K562 (cell line): ENCODE measurements at regions of chr1 and their contacts with region 1.

Region 1: DNA sequence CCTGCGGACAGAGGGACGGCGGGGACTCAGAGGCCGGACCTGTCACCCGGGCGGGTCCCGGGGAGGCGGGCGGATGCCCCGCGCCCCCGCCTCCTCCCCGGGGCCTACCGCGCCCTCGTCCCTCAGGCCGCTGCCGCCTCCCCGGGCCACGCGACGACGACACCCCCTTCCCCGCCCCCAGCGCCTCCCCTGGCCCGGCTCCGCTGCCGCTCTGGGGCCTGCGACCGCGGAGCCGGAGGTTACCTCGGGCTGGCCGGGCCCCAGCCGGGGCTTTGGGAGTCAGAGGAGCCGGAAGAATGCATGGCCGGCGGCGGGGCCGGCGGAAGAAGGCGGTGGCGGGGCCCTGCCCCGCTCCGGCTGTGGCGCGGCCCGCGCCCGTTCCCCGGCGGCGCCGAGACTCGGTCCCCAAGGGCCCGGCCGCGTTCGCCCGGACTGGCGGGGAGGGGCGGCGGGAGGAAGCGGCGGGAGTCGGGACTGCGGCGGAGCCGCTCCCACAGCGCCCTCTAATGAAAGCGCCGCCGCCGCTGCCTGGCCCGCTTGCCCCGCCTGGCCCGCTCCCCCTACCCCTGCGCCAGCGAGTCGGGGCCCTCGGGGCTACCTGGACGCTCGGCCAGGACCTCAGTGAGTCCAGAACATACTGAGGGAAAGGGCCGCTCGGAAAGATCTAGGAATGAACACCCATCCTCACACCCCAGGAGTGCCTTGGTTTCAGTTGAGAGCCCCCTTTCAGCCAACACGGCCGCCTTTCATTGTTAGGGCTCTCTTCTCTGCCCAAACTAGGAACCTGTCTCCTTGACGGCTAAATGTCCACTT is at the start of gene LPGAT1:
- DNase-seq: peak; percentile 85 to 91 (median 91)
- ATAC-seq: peak; percentile 96
- H3K4me3 ChIP-seq: peak within 1 kb of the TSS; percentile 83
- H3K27ac ChIP-seq: peak within 1 kb of the TSS; percentile 76
- H3K4me1 ChIP-seq: peaks cover 18 to 20% of the 10 kb centered on the region in 2 experiments
- H3K27me3 ChIP-seq: no peaks in the 10 kb centered on the region
- CTCF ChIP-seq: peak; percentile 64 to 92 (median 80)
- EP300 ChIP-seq: no peak
- POLR2A ChIP-seq: no peak
- RAD21 ChIP-seq: peak; percentile 80 to 87
- polyA plus RNA-seq, gene LPGAT1: 5.7 to 6.7 TPM

Region 2: GRCh38 chr1:211092955-211093354 is 737.6 kb before region 1 on chr1:
- CTCF ChIA-PET with region 1: no interaction called
- POLR2A ChIA-PET with region 1: no interaction called
- in situ Hi-C with region 1: no loop called
- intact Hi-C with region 1: no loop called
- DNase-seq: no peak
- ATAC-seq: no peak
- H3K4me3 ChIP-seq: no peak overlapping the region
- H3K27ac ChIP-seq: no peak overlapping the region
- H3K4me1 ChIP-seq: no peaks in the 10 kb centered on the region
- H3K27me3 ChIP-seq: no peaks in the 10 kb centered on the region; a peak in 2 of 5 replicates
- CTCF ChIP-seq: no peak
- EP300 ChIP-seq: no peak
- POLR2A ChIP-seq: no peak
- RAD21 ChIP-seq: no peak

Region 3: GRCh38 chr1:211680752-211681327 is 149.7 kb before region 1 on chr1:
- CTCF ChIA-PET with region 1: interaction called, 9 read pairs
- POLR2A ChIA-PET with region 1: interaction called, 7 read pairs
- in situ Hi-C with region 1: no loop called
- intact Hi-C with region 1: loop called (anchors 5 kb)
- DNase-seq: peak; percentile 78 to 92 (median 84)
- ATAC-seq: peak; percentile 82
- H3K4me3 ChIP-seq: no peak overlapping the region
- H3K27ac ChIP-seq: no peak overlapping the region
- H3K4me1 ChIP-seq: peaks cover 4 to 12% of the 10 kb centered on the region in 2 experiments; a peak in 4 of 5 replicates
- H3K27me3 ChIP-seq: peaks cover 7 to 27% of the 10 kb centered on the region in 2 experiments; a peak in 2 of 5 replicates
- CTCF ChIP-seq: peak; percentile 92 to 97 (median 97)
- EP300 ChIP-seq: 0 out of 2 replicates have a peak, but pooled peaks have one; percentile 15
- POLR2A ChIP-seq: no peak
- RAD21 ChIP-seq: peak; percentile 95 to 97

Region 4: DNA sequence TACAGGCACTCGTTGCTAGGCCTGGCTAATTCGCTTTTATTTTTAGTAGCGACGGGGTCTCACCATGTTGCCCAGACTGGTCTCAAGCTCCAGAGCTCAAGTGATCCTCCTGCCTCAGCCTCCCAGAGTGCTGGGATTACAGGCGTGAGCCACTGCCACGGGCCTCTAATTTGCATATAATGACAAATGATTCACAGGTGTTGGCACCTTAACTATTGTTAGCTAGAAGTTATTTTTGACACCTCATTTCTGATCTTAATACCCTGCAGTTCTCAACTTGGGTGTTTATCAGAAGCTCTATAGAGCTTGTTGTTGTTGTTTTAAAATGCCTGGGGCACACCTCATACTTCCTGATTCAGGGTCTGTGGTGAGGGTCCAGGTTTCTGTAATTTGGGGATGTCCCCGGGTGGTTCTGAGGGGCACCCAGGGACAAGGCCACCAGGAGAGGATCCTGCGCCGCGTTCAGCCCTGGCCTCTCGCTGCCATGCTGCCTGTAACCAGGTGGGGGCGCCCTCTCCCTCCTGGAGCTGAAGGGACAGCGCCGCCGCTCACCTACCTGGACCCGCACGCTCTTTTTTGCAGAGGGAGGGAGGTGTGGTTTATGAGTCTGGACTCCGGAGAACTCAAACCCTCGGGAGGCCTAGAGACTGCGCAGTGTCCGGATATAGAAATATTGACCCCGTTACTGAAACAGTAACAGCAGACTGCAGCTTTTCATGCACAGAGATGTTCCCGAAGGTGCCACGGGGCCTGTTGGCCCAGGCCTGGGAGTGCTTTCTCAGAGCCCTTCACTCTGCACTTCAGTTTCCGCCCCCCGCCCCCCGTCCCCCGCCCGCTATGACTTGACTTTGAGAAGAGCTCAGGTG is 132.1 kb before region 1 on chr1:
- CTCF ChIA-PET with region 1: interaction called, 9 read pairs
- POLR2A ChIA-PET with region 1: interaction called, 4 read pairs
- in situ Hi-C with region 1: loop called (anchors 5 kb)
- intact Hi-C with region 1: loop called (anchors 1 kb)
- DNase-seq: peak; percentile 90 to 94 (median 92)
- ATAC-seq: peak; percentile 97
- H3K4me3 ChIP-seq: no peak overlapping the region
- H3K27ac ChIP-seq: no peak overlapping the region
- H3K4me1 ChIP-seq: peaks cover 12 to 13% of the 10 kb centered on the region in 2 experiments; a peak in 4 of 5 replicates
- H3K27me3 ChIP-seq: peaks cover 0 to 7% of the 10 kb centered on the region in 2 experiments; a peak in 1 of 5 replicates
- CTCF ChIP-seq: peak; percentile 99 to 100 (median 100)
- EP300 ChIP-seq: peak; percentile 31; the same call in 1 of the 2 replicates
- POLR2A ChIP-seq: no peak
- RAD21 ChIP-seq: peak; percentile 99

Region 5: DNA sequence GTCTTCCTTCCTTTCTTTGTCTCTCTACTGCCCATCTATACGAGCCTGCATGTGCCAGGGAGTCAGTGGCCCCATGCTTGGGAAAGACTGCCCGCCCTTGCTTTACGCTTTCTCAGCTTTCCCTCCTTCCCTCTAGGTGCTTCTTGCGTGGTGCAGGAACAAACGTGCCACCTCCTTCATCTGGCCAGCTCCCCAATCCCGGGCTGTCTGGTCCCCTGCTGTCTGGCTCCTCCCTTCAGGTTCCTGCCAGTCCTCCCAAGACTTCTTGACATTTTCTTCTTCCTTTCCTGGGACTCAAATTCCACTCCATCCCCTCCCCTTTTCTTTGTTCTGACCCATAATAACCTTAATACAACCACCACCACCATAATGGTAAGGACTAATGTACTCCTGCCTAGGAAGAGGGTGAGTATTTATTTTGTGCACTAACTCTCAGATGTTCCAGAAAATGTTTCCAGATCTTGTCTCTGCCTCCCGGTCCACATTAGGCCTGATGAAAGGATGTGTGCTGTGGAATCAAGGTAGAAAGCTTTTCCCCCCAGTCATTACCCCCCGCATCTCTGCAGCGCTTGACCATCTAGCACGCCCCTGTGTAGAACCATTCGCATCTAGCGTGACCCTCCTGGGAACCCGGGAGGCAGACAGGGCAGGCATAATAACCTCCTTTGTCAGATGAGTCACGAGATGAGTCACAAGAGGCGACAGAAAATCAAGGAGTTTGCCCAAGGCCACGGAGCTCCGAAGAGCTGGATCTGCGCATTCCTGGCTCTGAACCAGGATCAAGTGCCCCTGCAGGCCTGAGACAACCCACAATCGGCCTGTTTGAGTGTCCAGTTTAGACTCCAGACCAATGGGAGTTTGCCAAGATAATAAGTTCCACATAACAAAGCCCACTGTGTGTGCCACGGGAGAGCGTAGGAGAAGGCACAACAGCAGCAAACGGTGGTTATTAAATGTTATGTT is 95.0 kb before region 1 on chr1:
- CTCF ChIA-PET with region 1: no interaction called
- POLR2A ChIA-PET with region 1: no interaction called
- in situ Hi-C with region 1: no loop called
- intact Hi-C with region 1: loop called (anchors 5 kb)
- DNase-seq: peak; percentile 64 to 72 (median 66)
- ATAC-seq: peak; percentile 70
- H3K4me3 ChIP-seq: no peak overlapping the region
- H3K27ac ChIP-seq: no peak overlapping the region
- H3K4me1 ChIP-seq: peaks cover 15 to 31% of the 10 kb centered on the region in 2 experiments
- H3K27me3 ChIP-seq: no peaks in the 10 kb centered on the region
- CTCF ChIP-seq: no peak
- EP300 ChIP-seq: no peak
- POLR2A ChIP-seq: no peak
- RAD21 ChIP-seq: no peak

Region 6: DNA sequence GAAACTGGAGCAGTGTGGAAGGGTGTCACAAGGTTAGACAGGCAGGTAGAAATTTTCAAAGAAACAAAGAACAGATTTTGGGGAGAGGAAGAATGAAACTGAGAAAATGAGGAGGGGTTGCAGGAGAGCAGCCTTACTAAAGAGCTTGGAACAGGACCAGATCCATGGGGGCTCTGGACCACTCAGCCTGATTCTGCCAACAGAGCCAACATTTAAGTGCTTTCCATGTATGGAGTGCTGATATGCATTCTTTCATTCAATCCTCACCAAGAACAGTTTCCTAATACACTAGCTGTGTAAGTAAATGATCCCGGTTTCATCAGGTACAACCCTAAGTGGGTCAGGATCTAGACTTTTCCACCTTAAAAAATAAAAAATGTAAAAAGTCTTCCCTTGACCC is 16.2 kb before region 1 on chr1:
- CTCF ChIA-PET with region 1: no interaction called
- POLR2A ChIA-PET with region 1: interaction called, 17 read pairs
- in situ Hi-C with region 1: no loop called
- intact Hi-C with region 1: no loop called
- DNase-seq: no peak
- ATAC-seq: 0 out of 3 replicates have a peak, but pooled peaks have one; percentile 16
- H3K4me3 ChIP-seq: no peak overlapping the region
- H3K27ac ChIP-seq: no peak overlapping the region
- H3K4me1 ChIP-seq: no peaks in the 10 kb centered on the region
- H3K27me3 ChIP-seq: no peaks in the 10 kb centered on the region
- CTCF ChIP-seq: no peak
- EP300 ChIP-seq: no peak
- POLR2A ChIP-seq: no peak
- RAD21 ChIP-seq: no peak